Activated CD4-positive, alpha-beta T cell treated with anti-CD3 and anti-CD28 coated beads for 36 hours (primary cell): ENCODE measurements at regions of chr17 and their contacts with region 1.

Region 1: GRCh38 chr17:50087246-50087911 is 7.8 kb upstream of the PDK2 start:
- DNase-seq: peak; percentile 87
- ATAC-seq: peak; percentile 88
- H3K4me3 Mint-ChIP-seq: no peak overlapping the region
- H3K27ac Mint-ChIP-seq: no peak overlapping the region
- H3K4me1 Mint-ChIP-seq: no peaks in the 10 kb centered on the region
- H3K27me3 Mint-ChIP-seq: no peaks in the 10 kb centered on the region

Region 2: DNA sequence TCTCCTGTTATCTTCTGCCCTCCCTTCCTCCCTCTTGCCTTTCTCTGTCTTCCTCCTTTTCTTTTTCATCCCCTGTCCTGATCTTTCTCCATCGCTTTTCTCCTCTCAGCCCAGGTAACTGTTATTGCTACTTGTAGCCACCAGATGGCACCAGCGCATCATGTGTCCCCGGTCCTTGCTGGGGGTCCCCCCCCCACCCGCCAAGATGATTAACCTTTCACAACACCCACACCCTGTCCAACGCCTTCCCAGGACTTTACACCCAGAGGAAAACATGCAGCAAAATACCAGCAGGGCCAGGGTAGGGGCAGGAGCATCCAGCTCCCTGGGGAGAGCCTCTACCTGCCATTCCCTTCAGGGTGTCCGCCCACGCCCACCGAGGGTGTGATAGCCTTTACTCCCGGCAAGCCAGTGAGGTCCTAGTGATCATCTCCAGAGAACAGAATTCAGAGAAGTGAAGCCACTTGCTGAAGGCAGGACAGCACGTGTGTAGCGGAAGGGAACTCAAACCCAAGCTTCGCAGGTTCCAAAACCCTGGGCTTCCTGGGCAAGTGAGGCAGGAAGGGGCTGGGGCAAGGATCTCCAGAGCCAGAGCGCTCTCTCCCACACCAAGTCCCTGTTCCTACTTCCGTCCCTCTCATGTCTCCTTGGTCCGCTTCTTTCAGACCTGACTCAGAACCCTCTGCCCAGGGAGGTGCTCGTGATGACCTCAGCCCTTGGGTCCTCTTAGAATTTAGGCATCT is 226.1 kb before region 1 on chr17:
- CTCF ChIA-PET with region 1: interaction called, 4 read pairs
- POLR2A ChIA-PET with region 1: no interaction called
- intact Hi-C with region 1: loop called in 1 of 2 experiments (anchors 1 kb)
- DNase-seq: peak; percentile 73
- ATAC-seq: peak; percentile 70
- H3K4me3 Mint-ChIP-seq: no peak overlapping the region
- H3K27ac Mint-ChIP-seq: no peak overlapping the region
- H3K4me1 Mint-ChIP-seq: peaks cover 4% of the 10 kb centered on the region
- H3K27me3 Mint-ChIP-seq: peaks cover 7% of the 10 kb centered on the region

Region 3: DNA sequence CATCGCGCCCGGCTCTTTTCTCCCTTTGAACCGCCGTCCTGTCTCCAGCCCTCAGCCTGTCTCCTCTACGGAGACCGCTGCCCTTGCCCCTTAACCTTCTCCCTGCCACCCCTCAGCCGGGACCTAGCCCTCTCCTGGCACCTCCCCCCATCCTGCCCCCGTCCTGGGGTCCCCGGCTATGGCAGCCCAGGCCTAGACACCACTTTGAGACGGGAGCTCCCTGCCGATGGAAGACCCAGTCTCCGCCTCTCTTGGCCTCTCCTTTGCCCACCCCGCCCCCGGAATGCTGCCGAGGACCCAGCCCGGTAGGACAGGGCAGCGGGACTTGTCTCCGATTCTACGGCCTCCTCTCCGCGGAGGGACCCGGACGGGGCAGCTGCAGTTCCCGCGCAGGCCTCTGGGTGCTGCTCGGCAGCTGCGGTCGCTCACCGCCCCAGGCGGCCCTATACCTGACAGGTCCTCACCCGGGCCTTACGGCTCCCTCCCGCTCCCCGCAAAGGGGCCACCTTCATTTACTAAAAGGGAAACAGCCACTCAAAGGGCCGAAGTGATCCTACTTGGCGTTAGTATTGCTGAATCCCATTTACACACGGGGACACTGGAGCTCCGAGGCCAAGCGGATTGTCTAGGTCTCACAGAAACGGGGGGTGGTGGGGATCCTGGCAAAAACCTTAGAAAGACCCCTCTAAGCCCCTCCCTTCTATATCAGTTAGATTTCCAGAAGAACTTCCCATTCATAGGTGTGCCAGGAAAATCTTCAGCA is 206.9 kb before region 1 on chr17:
- CTCF ChIA-PET with region 1: interaction called, 3 read pairs
- POLR2A ChIA-PET with region 1: no interaction called
- intact Hi-C with region 1: loop called in 1 of 2 experiments (anchors 1 kb)
- DNase-seq: peak; percentile 89
- ATAC-seq: peak; percentile 99
- H3K4me3 Mint-ChIP-seq: no peak overlapping the region
- H3K27ac Mint-ChIP-seq: no peak overlapping the region
- H3K4me1 Mint-ChIP-seq: peaks cover 7% of the 10 kb centered on the region
- H3K27me3 Mint-ChIP-seq: peaks cover 34% of the 10 kb centered on the region

Region 4: GRCh38 chr17:50026901-50027630 is 60.3 kb before region 1 on chr17:
- CTCF ChIA-PET with region 1: interaction called, 97 read pairs
- POLR2A ChIA-PET with region 1: no interaction called
- intact Hi-C with region 1: loop called (anchors 1 kb)
- DNase-seq: peak; percentile 86
- ATAC-seq: peak; percentile 71
- H3K4me3 Mint-ChIP-seq: no peak overlapping the region
- H3K27ac Mint-ChIP-seq: no peak overlapping the region
- H3K4me1 Mint-ChIP-seq: peaks cover 11% of the 10 kb centered on the region
- H3K27me3 Mint-ChIP-seq: peaks cover 25% of the 10 kb centered on the region

Region 5: DNA sequence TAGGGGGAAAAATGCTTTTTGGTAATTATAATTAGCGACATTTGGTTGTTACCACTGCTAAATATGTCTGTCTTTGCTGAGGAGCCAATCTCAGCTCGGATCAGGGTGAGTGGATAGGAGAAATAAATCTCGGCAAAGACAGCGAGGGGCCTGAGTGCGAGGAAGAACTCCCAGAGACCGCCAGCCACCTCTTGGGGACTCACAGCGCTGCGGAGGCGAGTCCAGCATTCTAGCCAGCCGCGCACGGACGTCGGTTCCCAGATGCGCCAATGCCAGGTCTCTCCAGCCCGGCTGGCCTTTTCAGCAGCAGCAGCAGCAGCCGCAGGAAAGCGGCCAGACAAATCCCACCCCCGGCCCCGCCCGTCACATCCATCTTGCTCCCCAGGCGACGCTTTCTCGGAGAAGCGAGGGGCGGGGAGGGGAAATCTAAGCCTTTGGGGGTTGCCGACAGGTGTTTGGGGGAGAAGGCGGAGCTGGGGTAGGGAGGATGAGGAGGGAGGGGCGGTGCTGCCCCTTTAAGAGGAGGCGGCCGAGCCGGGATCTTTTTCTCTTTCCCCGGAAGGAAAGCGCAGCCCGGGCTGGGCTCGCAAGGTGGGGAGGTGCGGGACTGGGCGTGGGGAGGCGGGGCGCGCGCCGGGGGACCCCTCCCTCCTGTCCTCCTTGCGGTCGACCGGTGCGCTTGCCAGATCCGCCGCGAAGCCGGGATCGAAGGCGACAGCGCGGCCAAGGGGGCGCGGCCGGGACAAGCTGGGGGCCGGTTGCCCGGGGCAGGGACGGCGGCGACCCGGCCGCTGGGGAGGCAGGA is 31.8 kb before region 1 on chr17 and contains the start of gene ITGA3:
- CTCF ChIA-PET with region 1: interaction called, 11 read pairs
- POLR2A ChIA-PET with region 1: no interaction called
- intact Hi-C with region 1: no loop called
- DNase-seq: peak; percentile 72
- ATAC-seq: peak; percentile 17
- H3K4me3 Mint-ChIP-seq: peak within 1 kb of the TSS; percentile 82
- H3K27ac Mint-ChIP-seq: peak within 1 kb of the TSS; percentile 25
- H3K4me1 Mint-ChIP-seq: peaks cover 33% of the 10 kb centered on the region
- H3K27me3 Mint-ChIP-seq: peaks cover 4% of the 10 kb centered on the region
- total RNA-seq, gene ITGA3: 6.8 to 7.8 TPM

Region 6: GRCh38 chr17:50101346-50102163 is 14.2 kb after region 1 on chr17:
- CTCF ChIA-PET with region 1: interaction called, 24 read pairs
- POLR2A ChIA-PET with region 1: no interaction called
- intact Hi-C with region 1: no loop called
- DNase-seq: no peak
- ATAC-seq: no peak
- H3K4me3 Mint-ChIP-seq: no peak overlapping the region
- H3K27ac Mint-ChIP-seq: no peak overlapping the region
- H3K4me1 Mint-ChIP-seq: no peaks in the 10 kb centered on the region
- H3K27me3 Mint-ChIP-seq: no peaks in the 10 kb centered on the region